CD4-positive, alpha-beta T cell (primary cell): ENCODE measurements at regions of chr1 and their contacts with region 1.

Region 1: DNA sequence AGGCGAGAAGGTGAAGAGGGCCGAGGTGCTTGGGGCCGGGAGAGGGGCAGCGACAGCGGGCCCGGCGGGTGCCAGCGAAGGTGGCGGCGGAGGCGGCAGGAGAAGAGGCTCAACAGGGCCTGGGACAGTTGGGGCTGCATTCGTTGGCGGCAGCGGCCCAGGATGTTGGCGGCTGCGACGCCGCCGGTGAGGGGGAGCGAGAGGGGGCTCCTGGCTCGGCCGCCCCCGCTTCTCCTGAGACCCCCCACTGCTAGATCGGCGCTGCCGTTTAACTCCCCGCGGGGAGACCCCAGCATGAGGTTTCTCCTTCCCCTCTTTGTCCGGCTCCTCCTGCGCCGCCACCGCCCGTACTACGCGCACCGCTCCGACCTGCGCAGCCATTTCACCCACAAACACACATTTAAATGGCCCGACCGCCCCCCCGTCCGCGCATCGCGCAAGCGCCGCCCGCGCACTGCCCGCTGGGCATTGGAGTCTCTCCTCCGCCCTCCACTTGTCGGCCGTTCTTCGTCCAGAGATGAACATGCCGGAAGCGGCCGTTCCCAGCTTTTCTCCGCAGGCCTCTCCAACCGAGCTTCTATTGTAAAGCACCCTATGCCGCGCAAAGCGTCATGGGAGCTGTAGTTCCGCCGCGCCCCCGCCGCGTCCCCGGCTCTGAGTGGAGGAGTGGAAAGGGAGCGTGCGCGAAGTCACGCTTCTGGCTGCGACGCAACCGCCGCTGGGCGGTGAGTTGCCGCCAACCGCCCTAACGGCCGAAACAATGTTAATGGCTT is at the start of gene RSBN1:
- DNase-seq: peak; percentile 96 to 100 (median 97)
- ATAC-seq: peak; percentile 91
- H3K4me3 ChIP-seq: peak within 1 kb of the TSS; percentile 89
- H3K4me3 Mint-ChIP-seq: peak within 1 kb of the TSS; percentile 97
- H3K27ac ChIP-seq: peak within 1 kb of the TSS; percentile 89 to 96
- H3K27ac Mint-ChIP-seq: peak within 1 kb of the TSS; percentile 96
- H3K4me1 ChIP-seq: peaks cover 15% of the 10 kb centered on the region
- H3K4me1 Mint-ChIP-seq: peaks cover 47% of the 10 kb centered on the region
- H3K27me3 ChIP-seq: no peaks in the 10 kb centered on the region
- H3K27me3 Mint-ChIP-seq: no peaks in the 10 kb centered on the region
- CTCF ChIP-seq: peak; percentile 15
- total RNA-seq, gene RSBN1: 44.2 to 44.6 TPM

Region 2: GRCh38 chr1:112955781-112956543 is 856.1 kb before region 1 on chr1 and contains the start of gene SLC16A1:
- CTCF ChIA-PET with region 1: no interaction called
- POLR2A ChIA-PET with region 1: interaction called, 3 read pairs
- intact Hi-C with region 1: loop called (anchors 5 to 10 kb)
- DNase-seq: peak; percentile 78 to 95 (median 86)
- ATAC-seq: peak; percentile 74
- H3K4me3 ChIP-seq: peak within 1 kb of the TSS; percentile 86
- H3K4me3 Mint-ChIP-seq: peak within 1 kb of the TSS; percentile 98
- H3K27ac ChIP-seq: peak within 1 kb of the TSS; percentile 80 to 84
- H3K27ac Mint-ChIP-seq: peak within 1 kb of the TSS; percentile 76
- H3K4me1 ChIP-seq: peaks cover 35% of the 10 kb centered on the region
- H3K4me1 Mint-ChIP-seq: peaks cover 61% of the 10 kb centered on the region
- H3K27me3 ChIP-seq: no peaks in the 10 kb centered on the region
- H3K27me3 Mint-ChIP-seq: no peaks in the 10 kb centered on the region
- CTCF ChIP-seq: peak; percentile 14
- total RNA-seq, gene SLC16A1: 22.9 to 26.6 TPM

Region 3: GRCh38 chr1:113691184-113691583 is 120.9 kb before region 1 on chr1:
- CTCF ChIA-PET with region 1: no interaction called
- POLR2A ChIA-PET with region 1: no interaction called
- intact Hi-C with region 1: no loop called
- DNase-seq: no peak
- ATAC-seq: no peak
- H3K4me3 ChIP-seq: no peak overlapping the region
- H3K4me3 Mint-ChIP-seq: no peak overlapping the region
- H3K27ac ChIP-seq: no peak overlapping the region
- H3K27ac Mint-ChIP-seq: no peak overlapping the region
- H3K4me1 ChIP-seq: no peaks in the 10 kb centered on the region
- H3K4me1 Mint-ChIP-seq: no peaks in the 10 kb centered on the region
- H3K27me3 ChIP-seq: no peaks in the 10 kb centered on the region
- H3K27me3 Mint-ChIP-seq: no peaks in the 10 kb centered on the region
- CTCF ChIP-seq: no peak

Region 4: DNA sequence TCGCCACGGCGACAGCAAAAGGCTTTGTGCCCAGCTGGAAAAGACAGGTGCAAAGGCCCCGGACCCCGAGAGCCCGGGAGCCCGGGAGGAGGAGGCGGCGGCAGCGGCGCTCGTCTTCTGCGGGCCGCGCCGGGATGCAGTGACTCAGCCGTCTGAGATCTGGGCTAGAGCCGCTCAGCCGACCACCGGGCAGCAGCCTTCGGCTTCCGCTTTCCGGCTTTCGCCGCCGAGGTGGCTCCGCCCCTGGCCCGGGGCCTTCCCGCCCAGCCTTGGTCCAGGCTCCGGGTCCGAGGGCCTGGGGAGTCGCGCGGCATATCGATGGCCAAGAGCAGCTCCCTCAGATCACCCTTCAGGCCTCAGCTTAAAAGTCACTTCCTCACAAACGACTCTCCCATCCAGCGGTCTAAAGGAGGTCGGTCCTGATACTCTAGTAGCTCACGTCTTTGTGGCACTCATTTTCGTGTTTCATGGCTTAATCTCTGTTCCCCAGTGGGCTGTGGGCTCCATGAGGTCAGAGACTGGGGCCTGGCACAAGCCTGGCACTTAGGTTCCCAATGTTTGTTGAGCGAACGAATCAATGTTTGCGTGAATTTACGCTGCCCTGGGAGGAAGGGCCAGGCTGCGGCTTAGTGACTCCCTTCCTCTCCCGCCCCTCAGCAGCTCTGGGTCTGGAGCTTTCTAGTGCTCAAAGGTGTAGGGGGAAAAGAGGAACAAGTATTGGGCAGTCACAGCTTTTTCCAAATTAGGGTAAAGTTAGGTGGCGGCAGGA is 52.6 kb before region 1 on chr1 and contains the start of gene PHTF1:
- CTCF ChIA-PET with region 1: interaction called, 5 read pairs
- POLR2A ChIA-PET with region 1: interaction called, 47 read pairs
- intact Hi-C with region 1: loop called (anchors 1 to 2 kb)
- DNase-seq: peak; percentile 20 to 82 (median 46)
- ATAC-seq: peak; percentile 68
- H3K4me3 ChIP-seq: peak within 1 kb of the TSS; percentile 91
- H3K4me3 Mint-ChIP-seq: peak within 1 kb of the TSS; percentile 95
- H3K27ac ChIP-seq: peak within 1 kb of the TSS; percentile 57 to 81
- H3K27ac Mint-ChIP-seq: peak within 1 kb of the TSS; percentile 80
- H3K4me1 ChIP-seq: peaks cover 20% of the 10 kb centered on the region
- H3K4me1 Mint-ChIP-seq: peaks cover 41% of the 10 kb centered on the region
- H3K27me3 ChIP-seq: no peaks in the 10 kb centered on the region
- H3K27me3 Mint-ChIP-seq: no peaks in the 10 kb centered on the region
- CTCF ChIP-seq: no peak
- total RNA-seq, gene PHTF1: 3.1 to 4.0 TPM

Region 5: DNA sequence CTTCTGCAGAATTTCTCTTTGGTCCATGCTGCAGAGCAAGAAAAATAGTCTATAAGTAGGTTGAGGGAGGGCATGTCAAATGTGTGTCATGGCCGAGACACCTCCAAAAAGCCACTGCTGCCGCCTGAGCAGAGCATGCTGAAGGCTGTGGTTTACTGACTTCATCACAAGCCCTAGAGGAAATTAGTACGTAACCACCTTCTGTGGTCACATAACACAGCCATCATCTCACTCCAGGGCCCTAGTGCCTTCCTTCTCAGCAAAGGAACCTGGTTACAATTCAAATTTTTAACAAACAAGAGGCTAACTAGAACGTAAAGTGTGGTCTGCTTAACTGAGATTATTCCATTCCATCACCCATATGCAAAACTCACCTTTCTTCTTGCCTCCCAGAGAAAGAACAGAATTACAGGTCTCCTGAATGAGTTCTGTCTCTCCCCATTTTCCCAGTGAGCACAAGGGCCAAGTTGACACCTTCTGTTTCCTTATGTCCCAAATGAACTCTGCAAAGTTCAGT is 59.6 kb after region 1 on chr1 and contains the start of gene PTPN22:
- CTCF ChIA-PET with region 1: no interaction called
- POLR2A ChIA-PET with region 1: interaction called, 6 read pairs
- intact Hi-C with region 1: loop called in 1 of 2 experiments (anchors 1 kb)
- DNase-seq: peak; percentile 65 to 95 (median 75)
- ATAC-seq: peak; percentile 92
- H3K4me3 ChIP-seq: peak within 1 kb of the TSS; percentile 55
- H3K4me3 Mint-ChIP-seq: peak within 1 kb of the TSS; percentile 90
- H3K27ac ChIP-seq: peak within 1 kb of the TSS; percentile 75 to 78
- H3K27ac Mint-ChIP-seq: peak within 1 kb of the TSS; percentile 94
- H3K4me1 ChIP-seq: peaks cover 38% of the 10 kb centered on the region
- H3K4me1 Mint-ChIP-seq: peaks cover 75% of the 10 kb centered on the region
- H3K27me3 ChIP-seq: no peaks in the 10 kb centered on the region
- H3K27me3 Mint-ChIP-seq: no peaks in the 10 kb centered on the region
- CTCF ChIP-seq: no peak
- total RNA-seq, gene PTPN22: 28.3 to 30.2 TPM

Region 6: DNA sequence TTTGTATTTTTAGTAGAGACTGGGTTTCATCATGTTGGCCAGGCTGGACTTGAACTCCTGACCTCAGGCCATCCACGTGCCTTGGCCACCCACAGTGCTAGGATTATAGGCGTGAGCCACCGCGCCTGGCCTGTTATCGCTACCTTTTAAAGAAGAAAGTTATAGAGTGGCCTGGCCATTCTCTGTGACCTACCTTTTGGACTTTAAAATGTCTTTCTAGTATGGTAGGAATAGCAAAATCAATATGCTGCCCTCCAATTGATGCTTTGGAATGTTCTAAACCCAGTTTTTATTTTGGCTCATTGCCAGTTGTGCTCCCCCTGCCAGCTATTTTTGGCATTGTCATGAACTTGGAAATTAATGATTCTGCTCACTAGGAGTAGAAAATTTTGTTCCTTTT is 136.9 kb after region 1 on chr1:
- CTCF ChIA-PET with region 1: no interaction called
- POLR2A ChIA-PET with region 1: interaction called, 15 read pairs
- intact Hi-C with region 1: no loop called
- DNase-seq: peak in 2 of 14 experiments; percentile 58 to 63
- ATAC-seq: no peak
- H3K4me3 ChIP-seq: no peak overlapping the region
- H3K4me3 Mint-ChIP-seq: peak overlapping the region; percentile 51
- H3K27ac ChIP-seq: peak overlapping the region; percentile 60 to 66
- H3K27ac Mint-ChIP-seq: peak overlapping the region; percentile 89
- H3K4me1 ChIP-seq: peaks cover 50% of the 10 kb centered on the region
- H3K4me1 Mint-ChIP-seq: peaks cover 92% of the 10 kb centered on the region
- H3K27me3 ChIP-seq: no peaks in the 10 kb centered on the region
- H3K27me3 Mint-ChIP-seq: no peaks in the 10 kb centered on the region
- CTCF ChIP-seq: peak; percentile 43